ENCODE measurements at regions of chr10 and their contacts with region 1.

Region 1: DNA sequence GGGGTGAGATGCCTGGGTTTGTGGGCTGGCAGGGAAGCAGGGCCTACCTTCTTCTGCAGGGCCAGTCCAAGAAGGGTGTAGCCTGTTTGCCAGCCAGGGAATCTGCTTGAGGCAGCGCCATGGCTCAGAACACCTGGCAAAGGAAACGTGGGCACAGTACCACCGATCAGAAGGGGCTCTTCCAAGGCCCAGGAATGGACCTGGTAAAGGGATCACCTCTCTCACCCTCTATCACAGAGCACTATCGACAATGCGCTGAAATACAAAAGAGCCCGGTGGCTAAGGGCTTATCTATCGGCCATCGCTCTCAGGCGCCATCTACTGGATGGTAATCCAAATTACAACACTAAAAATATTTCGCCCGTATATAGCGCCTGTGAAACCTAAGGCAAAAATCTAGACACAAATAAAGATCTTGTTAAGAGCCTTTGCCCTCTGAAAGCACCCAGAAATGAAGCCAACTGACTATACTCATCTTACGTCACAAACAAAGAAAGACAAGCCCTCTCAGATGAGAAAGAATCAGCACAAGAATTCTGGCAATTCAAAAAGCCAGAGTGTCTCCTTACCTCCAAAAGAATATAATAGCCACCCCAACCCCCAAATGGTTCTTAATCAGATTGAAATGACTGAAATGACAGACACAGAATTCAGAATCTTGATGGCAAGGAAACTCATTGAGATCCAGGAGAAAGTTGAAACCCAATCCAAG is 217.8 kb upstream of the HPS1 start:
- DNase-seq: peak; percentile 10
- H3K4me3 ChIP-seq: no peak overlapping the region
- H3K27ac ChIP-seq: no peak overlapping the region
- H3K4me1 ChIP-seq: no peaks in the 10 kb centered on the region
- H3K27me3 ChIP-seq: no peaks in the 10 kb centered on the region
- CTCF ChIP-seq: peak; percentile 44 to 62 (median 58)
- EP300 ChIP-seq: no peak
- POLR2A ChIP-seq: no peak

Region 2: GRCh38 chr10:98262571-98262970 is 401.9 kb before region 1 on chr10:
- in situ Hi-C with region 1: no loop called
- intact Hi-C with region 1: no loop called
- DNase-seq: no peak
- H3K4me3 ChIP-seq: no peak overlapping the region
- H3K27ac ChIP-seq: no peak overlapping the region
- H3K4me1 ChIP-seq: peaks cover 0 to 12% (median 2%) of the 10 kb centered on the region in 4 donors
- H3K27me3 ChIP-seq: peaks cover 19% of the 10 kb centered on the region
- CTCF ChIP-seq: peak in 4 of 5 experiments; percentile 22 to 30 (median 28)
- EP300 ChIP-seq: no peak
- POLR2A ChIP-seq: no peak

Region 3: DNA sequence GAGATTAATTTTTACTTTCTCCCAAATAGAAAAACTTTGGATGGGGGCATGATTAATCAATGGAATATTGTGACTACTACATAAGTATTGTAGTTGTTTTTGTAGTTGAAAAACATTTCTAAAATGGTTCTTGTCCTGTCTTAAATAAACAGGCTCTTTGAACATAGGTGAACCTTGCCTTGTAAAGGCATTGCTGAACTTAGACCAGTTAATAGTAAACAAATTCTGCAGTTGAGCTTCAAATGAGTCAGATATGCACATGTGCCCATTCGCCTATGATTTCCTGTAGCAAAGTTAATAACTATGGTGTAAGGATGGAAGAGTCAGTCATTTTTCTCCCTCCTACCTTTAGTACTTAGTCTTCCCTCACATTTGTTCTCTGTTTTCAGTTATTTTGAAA is 1090.2 kb after region 1 on chr10:
- in situ Hi-C with region 1: no loop called
- intact Hi-C with region 1: loop called (anchors 5 kb)
- DNase-seq: no peak
- H3K4me3 ChIP-seq: no peak overlapping the region
- H3K27ac ChIP-seq: no peak overlapping the region
- H3K4me1 ChIP-seq: no peaks in the 10 kb centered on the region
- H3K27me3 ChIP-seq: no peaks in the 10 kb centered on the region
- CTCF ChIP-seq: no peak
- EP300 ChIP-seq: no peak
- POLR2A ChIP-seq: no peak